ENCODE measurements at regions of chr15 and their contacts with region 1.

Region 1: DNA sequence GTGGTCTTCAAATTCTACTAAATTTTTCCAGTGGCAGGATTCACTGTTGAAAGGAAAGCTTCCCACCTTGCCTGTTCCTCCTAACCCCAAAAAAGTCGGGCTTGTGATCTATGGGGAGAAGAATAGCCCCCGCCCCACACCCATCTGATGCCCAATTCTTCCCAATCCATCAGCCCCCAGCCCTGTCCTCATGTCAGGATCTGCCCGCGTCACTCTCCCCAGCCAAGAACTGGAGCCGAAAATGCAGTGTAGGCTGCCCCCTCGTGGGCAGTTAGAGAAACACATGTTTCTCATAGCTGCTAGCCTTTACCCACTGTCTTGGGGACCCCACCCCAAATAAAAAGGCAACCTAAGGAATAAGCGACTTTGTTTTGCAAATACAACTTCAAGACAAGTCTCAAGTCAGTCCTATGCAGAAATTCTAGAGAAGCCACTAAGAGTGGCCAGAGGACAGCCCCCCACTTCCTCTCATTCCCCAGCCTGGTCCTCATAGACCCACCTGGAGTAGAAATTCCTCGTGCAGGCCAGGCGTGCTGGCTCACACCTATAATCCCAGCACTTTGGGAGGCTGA is 13.0 kb upstream of the CSK start:
- DNase-seq: peak; percentile 67 to 74 (median 68)
- ATAC-seq: peak; percentile 68
- H3K4me3 ChIP-seq: no peak overlapping the region
- H3K27ac ChIP-seq: no peak overlapping the region
- H3K4me1 ChIP-seq: peaks cover 6% of the 10 kb centered on the region
- H3K27me3 ChIP-seq: no peaks in the 10 kb centered on the region
- CTCF ChIP-seq: peak; percentile 59 to 84 (median 78)
- POLR2A ChIP-seq: no peak

Region 2: DNA sequence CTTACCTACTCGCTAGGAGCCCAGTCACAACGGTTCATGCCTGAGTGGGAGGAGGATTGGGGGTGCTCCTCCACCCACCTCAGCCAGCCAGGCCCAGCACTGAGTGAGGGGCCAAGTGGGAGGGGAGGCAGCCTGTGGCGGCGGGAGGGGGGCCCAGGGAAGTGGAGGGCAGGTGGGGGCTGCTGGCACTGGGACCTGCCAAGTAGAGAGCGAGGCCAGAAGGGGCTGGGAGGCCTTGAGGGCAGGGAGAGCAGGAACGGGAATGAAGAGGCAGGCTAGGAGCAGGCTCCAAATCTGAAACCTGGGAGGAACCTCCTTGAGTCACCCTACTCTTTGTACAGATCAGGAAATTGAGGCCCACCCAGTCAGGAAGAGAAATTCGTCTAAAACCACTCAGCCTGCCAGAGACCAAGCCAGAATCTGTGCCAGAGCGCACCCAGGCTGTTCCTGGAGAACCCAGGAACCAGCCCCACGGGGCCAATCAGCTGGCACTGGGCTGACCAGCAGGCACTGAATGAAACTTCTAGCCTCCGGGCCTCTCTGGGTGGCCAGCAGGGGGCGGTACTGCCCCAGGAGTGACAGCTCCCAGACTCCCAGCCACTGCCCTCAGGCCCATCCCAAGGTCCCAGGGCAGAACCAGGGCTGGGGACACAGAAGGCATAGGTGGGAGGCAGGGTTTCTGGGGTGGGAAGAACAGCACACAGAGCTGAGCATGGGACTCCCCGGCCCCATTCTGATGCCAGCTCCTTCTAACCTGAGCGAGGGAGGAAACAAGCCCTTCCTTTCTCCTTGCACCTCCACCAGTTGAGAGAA is 386.6 kb before region 1 on chr15:
- intact Hi-C with region 1: loop called (anchors 10 kb)
- DNase-seq: peak; percentile 82 to 88 (median 85)
- ATAC-seq: peak; percentile 81
- H3K4me3 ChIP-seq: no peak overlapping the region
- H3K27ac ChIP-seq: no peak overlapping the region
- H3K4me1 ChIP-seq: no peaks in the 10 kb centered on the region
- H3K27me3 ChIP-seq: no peaks in the 10 kb centered on the region
- CTCF ChIP-seq: peak; percentile 73 to 91 (median 83)
- POLR2A ChIP-seq: no peak

Region 3: GRCh38 chr15:74631408-74632247 is 137.2 kb before region 1 on chr15:
- intact Hi-C with region 1: loop called (anchors 5 kb)
- DNase-seq: peak; percentile 62 to 74 (median 64)
- ATAC-seq: peak; percentile 69
- H3K4me3 ChIP-seq: no peak overlapping the region
- H3K27ac ChIP-seq: no peak overlapping the region
- H3K4me1 ChIP-seq: no peaks in the 10 kb centered on the region
- H3K27me3 ChIP-seq: no peaks in the 10 kb centered on the region
- CTCF ChIP-seq: peak; percentile 53 to 68 (median 60)
- POLR2A ChIP-seq: no peak

Region 4: GRCh38 chr15:74950078-74951000 is 181.5 kb after region 1 on chr15:
- intact Hi-C with region 1: loop called (anchors 5 kb)
- DNase-seq: peak; percentile 78 to 89 (median 84)
- ATAC-seq: peak; percentile 92
- H3K4me3 ChIP-seq: no peak overlapping the region
- H3K27ac ChIP-seq: no peak overlapping the region
- H3K4me1 ChIP-seq: peaks cover 15% of the 10 kb centered on the region
- H3K27me3 ChIP-seq: no peaks in the 10 kb centered on the region
- CTCF ChIP-seq: peak; percentile 92 to 99 (median 98)
- POLR2A ChIP-seq: no peak

Measured in body of pancreas (tissue), 4 donors.